WTC11 (cell line): ENCODE measurements at regions of chr4 and their contacts with region 1.

Region 1: GRCh38 chr4:53432528-53433424 is 55.3 kb downstream of the FIP1L1 start:
- DNase-seq: no peak
- ATAC-seq: no peak
- H3K4me3 Mint-ChIP-seq: no peak overlapping the region
- H3K27ac Mint-ChIP-seq: no peak overlapping the region
- H3K4me1 Mint-ChIP-seq: no peaks in the 10 kb centered on the region
- H3K27me3 Mint-ChIP-seq: no peaks in the 10 kb centered on the region
- CTCF ChIP-seq: no peak

Region 2: DNA sequence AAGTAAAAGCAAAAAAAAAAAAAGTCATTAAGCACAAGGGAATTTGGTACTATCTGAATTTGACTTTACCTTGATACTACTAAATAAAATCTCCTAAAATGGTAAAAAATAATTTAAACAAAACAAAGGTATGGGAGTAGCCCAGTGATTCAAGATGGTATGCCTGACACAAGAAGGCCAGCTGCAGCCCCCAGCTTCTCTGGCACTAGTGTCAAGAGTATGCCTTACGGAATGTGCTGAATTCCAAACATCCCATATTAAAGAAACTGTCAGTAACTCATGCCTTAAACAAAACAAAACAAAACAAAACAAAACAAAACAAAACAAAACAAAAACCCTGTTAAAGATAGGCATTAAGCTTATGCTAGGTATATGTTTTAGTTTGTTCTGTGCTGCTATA is 489.8 kb before region 1 on chr4:
- CTCF ChIA-PET with region 1: no interaction called
- POLR2A ChIA-PET with region 1: interaction called, 12 read pairs
- DNase-seq: no peak
- ATAC-seq: no peak
- H3K4me3 Mint-ChIP-seq: no peak overlapping the region
- H3K27ac Mint-ChIP-seq: no peak overlapping the region
- H3K4me1 Mint-ChIP-seq: peaks cover 23% of the 10 kb centered on the region
- H3K27me3 Mint-ChIP-seq: no peaks in the 10 kb centered on the region
- CTCF ChIP-seq: no peak

Region 3: DNA sequence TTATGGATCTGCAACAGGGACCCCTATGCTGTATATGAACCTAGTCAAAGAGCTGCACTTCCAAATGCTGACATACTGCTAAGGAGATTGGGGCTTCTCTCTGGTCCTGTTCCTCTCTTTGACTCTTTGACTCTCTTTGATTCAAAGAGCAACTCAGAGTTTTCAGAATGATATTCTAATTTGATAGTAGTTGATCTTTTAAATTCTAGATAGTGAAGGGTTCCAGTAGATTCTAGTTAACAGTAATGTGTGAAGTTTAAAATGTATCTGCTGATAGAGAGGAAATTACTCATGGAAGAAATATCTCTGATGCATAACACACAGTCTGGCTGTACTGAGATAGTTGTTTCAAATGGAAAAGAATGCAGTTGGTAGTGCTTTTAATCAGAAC is 331.6 kb before region 1 on chr4:
- CTCF ChIA-PET with region 1: no interaction called
- POLR2A ChIA-PET with region 1: no interaction called
- DNase-seq: no peak
- ATAC-seq: no peak
- H3K4me3 Mint-ChIP-seq: no peak overlapping the region
- H3K27ac Mint-ChIP-seq: no peak overlapping the region
- H3K4me1 Mint-ChIP-seq: peaks cover 8% of the 10 kb centered on the region
- H3K27me3 Mint-ChIP-seq: no peaks in the 10 kb centered on the region; the same call in 1 of the 2 replicates
- CTCF ChIP-seq: no peak

Region 4: DNA sequence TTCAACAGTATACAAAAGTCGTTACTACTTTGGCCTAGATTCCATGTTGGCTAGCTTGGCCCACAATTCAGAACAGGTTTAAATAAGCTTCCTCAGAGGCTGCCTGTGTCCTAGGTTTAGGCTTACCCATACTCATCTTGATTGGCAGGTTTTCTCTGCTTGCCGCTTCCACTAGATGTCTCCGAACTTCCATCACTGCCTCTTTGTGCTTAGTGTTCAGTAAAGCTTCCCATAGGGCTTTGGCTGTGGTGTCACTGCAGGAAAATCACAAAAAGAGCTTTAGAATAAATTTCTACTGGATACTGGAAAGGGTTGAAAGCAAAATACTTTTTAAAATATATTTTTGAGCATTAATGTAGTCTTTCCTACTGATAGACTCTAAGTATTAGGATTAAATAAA is 119.3 kb before region 1 on chr4:
- CTCF ChIA-PET with region 1: no interaction called
- POLR2A ChIA-PET with region 1: no interaction called
- DNase-seq: no peak
- ATAC-seq: peak; percentile 97
- H3K4me3 Mint-ChIP-seq: no peak overlapping the region
- H3K27ac Mint-ChIP-seq: no peak overlapping the region
- H3K4me1 Mint-ChIP-seq: peaks cover 15% of the 10 kb centered on the region
- H3K27me3 Mint-ChIP-seq: no peaks in the 10 kb centered on the region
- CTCF ChIP-seq: no peak

Region 5: DNA sequence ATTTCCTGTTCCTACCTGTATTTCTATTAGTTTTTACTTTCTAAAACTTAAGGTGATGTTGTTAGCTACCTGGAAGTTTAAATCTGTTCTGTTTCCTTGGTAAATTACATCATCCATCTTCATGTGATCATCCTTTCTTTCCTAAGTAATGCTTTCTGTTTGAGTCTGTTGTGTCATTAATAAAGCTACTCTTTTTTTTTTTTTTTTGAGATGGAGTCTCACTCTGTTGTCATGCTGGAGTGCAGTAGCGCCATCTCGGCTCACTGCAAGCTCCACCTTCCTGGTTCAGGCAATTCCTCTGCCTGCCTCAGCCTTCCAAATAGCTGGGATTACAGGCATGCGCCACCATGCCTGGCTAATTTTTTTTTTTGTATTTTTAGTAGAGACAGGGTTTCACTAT is 18.0 kb after region 1 on chr4:
- CTCF ChIA-PET with region 1: no interaction called
- POLR2A ChIA-PET with region 1: no interaction called
- DNase-seq: peak; percentile 9
- ATAC-seq: peak; percentile 73
- H3K4me3 Mint-ChIP-seq: no peak overlapping the region
- H3K27ac Mint-ChIP-seq: peak overlapping the region; percentile 50
- H3K4me1 Mint-ChIP-seq: peaks cover 7% of the 10 kb centered on the region
- H3K27me3 Mint-ChIP-seq: no peaks in the 10 kb centered on the region
- CTCF ChIP-seq: no peak

Region 6: DNA sequence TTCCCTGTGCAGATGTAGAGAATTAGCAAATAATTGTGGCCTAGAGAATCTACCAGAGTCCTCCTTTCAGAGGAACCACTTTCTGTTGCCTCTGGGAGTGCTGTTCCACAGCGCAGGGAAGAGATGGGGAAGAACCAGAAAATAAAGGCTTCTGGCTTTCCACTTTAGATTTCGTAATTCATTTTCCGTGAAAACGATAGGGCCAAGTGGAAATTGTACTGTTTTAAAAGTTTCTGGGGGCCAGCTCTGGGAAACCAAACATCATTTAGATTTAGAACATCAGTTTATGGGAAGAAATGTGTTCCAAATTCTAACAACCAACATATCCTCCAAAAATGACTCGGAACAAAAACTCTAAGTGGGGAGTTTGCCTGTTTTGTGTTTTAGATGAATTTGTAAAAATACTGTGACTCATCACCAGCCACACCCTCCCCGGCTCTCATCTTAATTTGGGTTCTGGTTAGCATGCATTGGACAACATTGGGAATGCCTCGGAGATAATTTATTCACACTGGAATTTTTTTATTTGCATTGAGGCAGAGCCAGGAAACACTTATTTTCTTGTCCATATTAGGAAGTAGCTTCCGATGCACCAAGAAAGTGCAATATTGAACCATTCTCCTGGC is 223.8 kb after region 1 on chr4:
- CTCF ChIA-PET with region 1: no interaction called
- POLR2A ChIA-PET with region 1: no interaction called
- DNase-seq: no peak
- ATAC-seq: no peak
- H3K4me3 Mint-ChIP-seq: no peak overlapping the region
- H3K27ac Mint-ChIP-seq: no peak overlapping the region
- H3K4me1 Mint-ChIP-seq: peaks cover 11% of the 10 kb centered on the region
- H3K27me3 Mint-ChIP-seq: no peaks in the 10 kb centered on the region
- CTCF ChIP-seq: no peak